K562 (cell line): ENCODE measurements at regions of chr4 and their contacts with region 1.

Region 1: DNA sequence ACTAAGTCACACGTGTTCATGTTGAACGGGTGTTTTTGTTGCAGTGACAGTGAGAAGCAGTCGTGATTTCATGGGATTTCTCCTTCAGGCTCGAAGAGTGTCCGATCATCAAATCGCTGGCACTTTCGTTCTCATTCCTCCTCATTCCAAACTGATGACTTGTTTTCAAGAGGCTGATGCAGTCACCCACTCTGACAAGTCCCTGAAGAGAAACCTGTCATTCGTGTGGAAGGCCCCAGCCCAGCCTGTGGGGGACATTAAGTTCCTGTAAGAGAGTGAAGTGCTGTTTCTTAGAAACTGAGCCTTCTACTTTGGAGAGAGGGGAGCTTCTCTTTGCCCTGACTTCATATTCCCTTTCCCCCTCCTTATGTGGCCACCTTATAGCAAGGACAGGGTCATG is 8.0 kb downstream of the REELD1 start:
- DNase-seq: no peak
- ATAC-seq: no peak
- H3K4me3 ChIP-seq: no peak overlapping the region
- H3K27ac ChIP-seq: no peak overlapping the region
- H3K4me1 ChIP-seq: no peaks in the 10 kb centered on the region
- H3K27me3 ChIP-seq: peaks cover 4 to 22% of the 10 kb centered on the region in 2 experiments
- CTCF ChIP-seq: no peak
- EP300 ChIP-seq: no peak
- POLR2A ChIP-seq: no peak
- RAD21 ChIP-seq: no peak

Region 2: DNA sequence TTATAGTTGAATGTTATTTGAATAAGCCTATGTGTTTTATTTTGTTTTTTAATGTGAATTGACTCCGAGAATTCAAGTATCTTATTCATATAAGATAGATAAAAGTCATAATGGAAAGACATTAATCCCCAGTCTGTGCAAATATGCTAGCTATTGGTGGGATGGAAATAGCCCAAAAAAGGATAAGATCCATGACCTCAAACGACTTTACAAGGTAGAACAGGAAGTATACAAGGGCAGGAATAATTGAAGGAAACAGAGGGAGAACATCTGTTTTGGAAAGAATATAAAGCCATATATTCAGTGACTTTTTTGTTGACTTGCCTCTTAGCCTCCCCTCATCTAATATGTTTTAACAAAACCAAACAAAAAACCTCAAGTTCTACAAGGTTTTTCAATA is 1115.2 kb before region 1 on chr4:
- CTCF ChIA-PET with region 1: no interaction called
- POLR2A ChIA-PET with region 1: no interaction called
- in situ Hi-C with region 1: no loop called
- intact Hi-C with region 1: no loop called
- DNase-seq: no peak
- ATAC-seq: no peak
- H3K4me3 ChIP-seq: no peak overlapping the region
- H3K27ac ChIP-seq: no peak overlapping the region
- H3K4me1 ChIP-seq: peaks cover 2 to 6% of the 10 kb centered on the region in 2 experiments; a peak in 3 of 5 replicates
- H3K27me3 ChIP-seq: no peaks in the 10 kb centered on the region
- CTCF ChIP-seq: no peak
- EP300 ChIP-seq: no peak
- POLR2A ChIP-seq: no peak
- RAD21 ChIP-seq: no peak

Region 3: DNA sequence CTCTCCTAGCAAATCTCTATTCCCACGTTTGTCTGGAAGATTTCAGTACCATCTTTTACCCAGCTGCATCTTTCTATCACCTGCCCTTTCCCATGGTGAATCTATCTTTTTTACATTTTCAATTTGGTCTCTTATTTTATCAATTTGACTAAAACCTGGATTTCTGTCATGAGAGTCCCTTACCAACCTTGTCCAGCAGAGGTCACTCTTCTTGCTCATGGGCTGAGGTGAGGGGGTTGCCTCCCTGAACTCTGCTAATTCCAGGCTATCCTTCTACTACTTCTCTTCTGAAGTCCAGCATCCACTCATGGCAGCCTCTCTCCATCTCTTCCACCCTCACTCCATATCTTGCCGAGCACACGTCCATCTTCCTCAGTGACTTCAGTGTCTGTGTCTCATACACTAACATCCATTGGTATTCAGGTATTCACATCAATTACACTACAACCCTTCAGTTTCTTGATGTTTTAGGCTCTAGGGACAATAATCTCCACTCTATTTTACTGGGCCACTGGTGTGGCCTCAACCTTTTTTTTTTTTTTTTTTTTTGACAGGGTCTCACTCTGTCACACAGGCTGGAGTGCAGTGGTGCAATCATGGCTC is 265.9 kb before region 1 on chr4:
- CTCF ChIA-PET with region 1: no interaction called
- POLR2A ChIA-PET with region 1: no interaction called
- in situ Hi-C with region 1: no loop called
- intact Hi-C with region 1: loop called (anchors 10 kb)
- DNase-seq: peak; percentile 51 to 64 (median 60)
- ATAC-seq: peak; percentile 80
- H3K4me3 ChIP-seq: no peak overlapping the region
- H3K27ac ChIP-seq: no peak overlapping the region
- H3K4me1 ChIP-seq: no peaks in the 10 kb centered on the region; a peak in 1 of 5 replicates
- H3K27me3 ChIP-seq: no peaks in the 10 kb centered on the region
- CTCF ChIP-seq: peak; percentile 55 to 69 (median 57)
- EP300 ChIP-seq: no peak
- POLR2A ChIP-seq: no peak
- RAD21 ChIP-seq: no peak